ENCODE measurements at regions of chr17 and their contacts with region 1.

Region 1: DNA sequence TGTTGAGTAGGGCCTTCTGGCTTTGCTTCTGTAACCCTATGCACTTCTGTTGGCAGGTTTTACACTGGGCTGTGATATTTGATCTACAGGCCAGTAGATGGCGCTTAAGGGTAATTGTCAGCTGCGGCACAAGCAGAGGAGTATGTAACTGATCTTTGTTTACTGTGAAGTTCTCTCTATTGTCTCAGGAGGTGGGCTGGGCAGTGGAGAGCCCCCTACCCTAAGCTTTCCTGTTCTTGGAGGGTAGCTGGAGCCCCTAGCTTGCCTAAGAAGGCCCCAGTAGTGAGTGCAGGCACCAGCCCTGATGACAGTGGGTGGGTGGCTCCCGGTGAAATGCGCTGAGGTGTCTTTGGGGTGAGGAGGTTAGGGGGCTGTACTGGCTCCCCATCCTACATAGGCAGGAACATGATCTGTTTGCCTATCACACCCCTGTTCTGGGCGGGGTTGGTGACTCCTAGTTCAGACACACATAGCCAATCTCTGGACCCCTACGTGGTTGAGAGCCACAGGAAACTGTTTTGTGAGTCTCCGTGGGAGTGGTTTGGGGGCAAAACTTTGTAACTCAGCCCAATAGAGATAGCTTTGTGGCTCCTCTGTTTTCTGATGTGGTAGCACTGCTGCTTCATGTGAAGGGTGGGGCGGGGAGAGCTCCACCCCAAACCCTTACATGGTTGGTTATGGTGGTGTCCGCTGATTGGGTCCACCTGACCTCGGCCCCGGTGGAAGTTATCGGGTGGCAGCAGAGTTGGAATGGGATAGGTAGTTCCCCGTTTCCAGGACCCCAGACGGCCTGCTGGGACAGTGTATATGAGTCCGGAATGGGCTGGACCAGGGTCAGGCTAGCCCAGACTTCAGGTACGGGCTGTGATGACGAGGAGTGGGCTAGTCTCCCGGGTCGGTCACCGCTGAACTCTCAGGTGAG is 60.4 kb downstream of the SLFN11 start:
- DNase-seq: peak; percentile 77 to 99 (median 88)
- ATAC-seq: peak; percentile 92
- H3K4me3 ChIP-seq: peak overlapping the region; percentile 73 to 84
- H3K4me3 Mint-ChIP-seq: peak overlapping the region; percentile 97
- H3K27ac ChIP-seq: peak overlapping the region; percentile 75 to 86
- H3K27ac Mint-ChIP-seq: peak overlapping the region; percentile 98
- H3K4me1 ChIP-seq: peaks cover 26% of the 10 kb centered on the region
- H3K4me1 Mint-ChIP-seq: peaks cover 57% of the 10 kb centered on the region
- H3K27me3 ChIP-seq: no peaks in the 10 kb centered on the region
- H3K27me3 Mint-ChIP-seq: no peaks in the 10 kb centered on the region
- CTCF ChIP-seq: peak; percentile 88

Region 2: GRCh38 chr17:35242805-35243560 is 70.1 kb before region 1 on chr17 and contains the start of gene SLFN5:
- CTCF ChIA-PET with region 1: interaction called, 9 read pairs
- POLR2A ChIA-PET with region 1: interaction called, 36 read pairs
- intact Hi-C with region 1: loop called (anchors 1 kb)
- DNase-seq: peak; percentile 87 to 98 (median 94)
- ATAC-seq: peak; percentile 71
- H3K4me3 ChIP-seq: peak within 1 kb of the TSS; percentile 92
- H3K4me3 Mint-ChIP-seq: peak within 1 kb of the TSS; percentile 94
- H3K27ac ChIP-seq: peak within 1 kb of the TSS; percentile 94 to 96
- H3K27ac Mint-ChIP-seq: peak within 1 kb of the TSS; percentile 100
- H3K4me1 ChIP-seq: peaks cover 46% of the 10 kb centered on the region
- H3K4me1 Mint-ChIP-seq: peaks cover 63% of the 10 kb centered on the region
- H3K27me3 ChIP-seq: no peaks in the 10 kb centered on the region
- H3K27me3 Mint-ChIP-seq: no peaks in the 10 kb centered on the region
- CTCF ChIP-seq: no peak
- total RNA-seq, gene SLFN5: 46.7 to 47.0 TPM

Region 3: DNA sequence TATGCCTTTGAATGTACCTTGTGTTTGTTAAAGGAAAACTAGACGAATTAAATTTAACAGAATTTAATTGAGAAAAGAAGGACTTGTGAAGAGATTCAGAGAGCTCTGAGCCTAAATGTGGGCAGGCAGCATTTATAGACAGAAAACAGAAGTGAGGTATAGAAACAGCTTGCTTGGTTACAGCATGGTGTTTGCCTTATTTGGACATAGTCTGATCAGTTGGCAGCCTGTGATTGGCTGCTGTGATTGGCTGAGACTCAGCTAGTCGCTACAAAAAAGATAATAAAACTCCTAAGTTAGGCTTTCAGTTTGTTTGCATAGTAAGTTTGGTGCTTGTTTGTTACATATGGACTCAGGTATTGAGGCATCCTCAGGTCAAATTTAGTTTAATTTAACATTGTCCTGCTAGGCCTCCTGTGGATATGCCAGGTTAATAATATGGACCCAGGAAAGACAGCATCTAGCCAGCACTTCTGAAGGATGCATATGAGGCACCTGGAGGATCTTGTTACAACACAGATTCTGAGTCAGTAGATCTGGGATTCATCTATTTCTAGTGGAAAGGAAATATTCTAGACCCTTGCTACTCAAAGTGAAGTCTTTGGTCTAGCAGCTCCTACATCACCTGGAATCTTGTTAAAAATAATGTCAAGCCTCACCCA is 26.8 kb before region 1 on chr17:
- CTCF ChIA-PET with region 1: interaction called, 12 read pairs
- POLR2A ChIA-PET with region 1: no interaction called
- intact Hi-C with region 1: no loop called
- DNase-seq: peak in 3 of 9 experiments; percentile 50 to 67 (median 55)
- ATAC-seq: peak; percentile 97
- H3K4me3 ChIP-seq: peak overlapping the region in 1 of 2 experiments; percentile 6
- H3K4me3 Mint-ChIP-seq: peak overlapping the region; percentile 42
- H3K27ac ChIP-seq: peak overlapping the region; percentile 16 to 45
- H3K27ac Mint-ChIP-seq: peak overlapping the region; percentile 89
- H3K4me1 ChIP-seq: peaks cover 25% of the 10 kb centered on the region
- H3K4me1 Mint-ChIP-seq: peaks cover 47% of the 10 kb centered on the region
- H3K27me3 ChIP-seq: no peaks in the 10 kb centered on the region
- H3K27me3 Mint-ChIP-seq: no peaks in the 10 kb centered on the region
- CTCF ChIP-seq: no peak

Region 4: DNA sequence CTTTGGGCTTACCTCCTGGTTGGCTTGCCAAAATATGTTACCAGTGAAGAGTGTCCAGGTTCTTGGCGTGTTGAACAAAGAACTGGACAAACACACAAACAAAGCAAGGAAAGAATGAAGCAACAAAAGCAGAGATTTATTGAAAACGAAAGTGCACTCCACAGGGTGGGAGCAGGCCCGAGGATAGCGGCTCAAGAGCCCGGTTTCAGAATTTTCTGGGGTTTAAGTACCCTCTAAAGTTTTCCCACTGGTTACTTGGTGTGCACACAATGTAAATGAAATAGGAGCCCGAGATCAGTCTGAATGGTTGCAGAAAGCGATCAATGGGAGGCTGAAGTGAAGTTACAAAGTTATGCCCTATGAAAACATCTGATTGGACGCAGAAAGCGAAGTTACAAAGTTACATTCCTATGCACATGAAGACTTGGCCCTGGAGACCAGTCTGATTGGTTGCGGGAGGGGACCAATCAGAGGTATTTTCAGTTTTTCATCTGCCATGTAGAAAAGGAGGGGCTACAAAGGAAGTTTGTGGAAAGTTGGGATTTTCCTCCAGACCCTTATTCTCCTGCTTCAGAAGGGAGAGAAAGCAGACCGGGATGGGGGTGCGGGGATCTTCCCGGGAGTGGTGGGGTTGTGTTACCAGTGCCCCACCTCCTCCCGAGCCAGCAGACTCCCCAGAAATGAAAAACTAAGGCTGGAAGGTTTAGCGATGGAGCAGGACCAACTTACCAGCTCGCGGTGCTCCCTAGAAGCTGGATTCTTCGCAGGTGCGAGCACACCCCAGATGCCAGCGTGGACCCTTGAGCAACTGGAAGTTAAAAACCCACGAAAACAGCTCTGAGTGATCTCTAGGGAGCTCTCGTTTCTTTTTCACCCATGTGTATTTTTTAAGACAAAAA is 119.4 kb after region 1 on chr17 and contains the start of gene SLFN12:
- CTCF ChIA-PET with region 1: interaction called, 6 read pairs
- POLR2A ChIA-PET with region 1: interaction called, 5 read pairs
- intact Hi-C with region 1: loop called in 1 of 2 experiments (anchors 2 kb)
- DNase-seq: peak in 8 of 9 experiments; percentile 8 to 87 (median 50)
- ATAC-seq: peak; percentile 86
- H3K4me3 ChIP-seq: peak within 1 kb of the TSS; percentile 59 to 91
- H3K4me3 Mint-ChIP-seq: peak within 1 kb of the TSS; percentile 91
- H3K27ac ChIP-seq: peak within 1 kb of the TSS; percentile 42
- H3K27ac Mint-ChIP-seq: peak within 1 kb of the TSS; percentile 90
- H3K4me1 ChIP-seq: peaks cover 37% of the 10 kb centered on the region
- H3K4me1 Mint-ChIP-seq: peaks cover 46% of the 10 kb centered on the region
- H3K27me3 ChIP-seq: no peaks in the 10 kb centered on the region
- H3K27me3 Mint-ChIP-seq: no peaks in the 10 kb centered on the region
- CTCF ChIP-seq: no peak
- total RNA-seq, gene SLFN12: 2.4 TPM

Region 5: DNA sequence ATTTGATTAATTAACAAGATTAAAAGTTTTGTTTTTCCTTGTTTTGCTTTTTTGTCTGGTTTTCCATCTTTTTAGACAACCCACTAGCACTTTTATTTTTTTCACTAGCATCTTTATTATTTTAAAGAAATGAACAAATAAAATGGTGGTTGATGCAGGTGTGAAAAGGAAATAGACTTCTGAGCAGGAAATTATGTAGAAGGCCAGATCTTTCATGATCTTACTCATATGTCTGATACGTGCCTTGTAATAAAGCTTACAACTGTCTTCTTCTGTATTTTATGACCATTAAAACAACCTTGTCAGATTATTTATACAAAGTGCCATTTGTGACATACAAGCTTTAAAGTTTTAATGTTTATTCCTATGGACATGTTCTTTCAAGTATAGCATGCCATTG is 218.1 kb after region 1 on chr17:
- CTCF ChIA-PET with region 1: interaction called, 184 read pairs
- POLR2A ChIA-PET with region 1: interaction called, 122 read pairs
- intact Hi-C with region 1: loop called (anchors 1 kb)
- DNase-seq: peak in 2 of 9 experiments; percentile 50 to 71
- ATAC-seq: peak; percentile 42
- H3K4me3 ChIP-seq: peak overlapping the region in 1 of 2 experiments; percentile 1
- H3K4me3 Mint-ChIP-seq: peak overlapping the region; percentile 27
- H3K27ac ChIP-seq: peak overlapping the region; percentile 42 to 66
- H3K27ac Mint-ChIP-seq: peak overlapping the region; percentile 96
- H3K4me1 ChIP-seq: peaks cover 57% of the 10 kb centered on the region
- H3K4me1 Mint-ChIP-seq: peaks cover 72% of the 10 kb centered on the region
- H3K27me3 ChIP-seq: no peaks in the 10 kb centered on the region
- H3K27me3 Mint-ChIP-seq: no peaks in the 10 kb centered on the region
- CTCF ChIP-seq: no peak